ENCODE measurements at regions of chr14 and their contacts with region 1.

Region 1: GRCh38 chr14:79825046-79825521 is 386.2 kb downstream of the DIO2 start:
- DNase-seq: peak in 2 of 10 donors; percentile 27 to 58
- H3K4me3 ChIP-seq: peak overlapping the region in 21 of 59 donors; percentile 0 to 38 (median 17)
- H3K27ac ChIP-seq: peak overlapping the region; percentile 76 to 100 (median 94)
- H3K27me3 ChIP-seq: no peaks in the 10 kb centered on the region
- CTCF ChIP-seq: peak in 3 of 56 donors; percentile 10 to 18 (median 14)

Region 2: DNA sequence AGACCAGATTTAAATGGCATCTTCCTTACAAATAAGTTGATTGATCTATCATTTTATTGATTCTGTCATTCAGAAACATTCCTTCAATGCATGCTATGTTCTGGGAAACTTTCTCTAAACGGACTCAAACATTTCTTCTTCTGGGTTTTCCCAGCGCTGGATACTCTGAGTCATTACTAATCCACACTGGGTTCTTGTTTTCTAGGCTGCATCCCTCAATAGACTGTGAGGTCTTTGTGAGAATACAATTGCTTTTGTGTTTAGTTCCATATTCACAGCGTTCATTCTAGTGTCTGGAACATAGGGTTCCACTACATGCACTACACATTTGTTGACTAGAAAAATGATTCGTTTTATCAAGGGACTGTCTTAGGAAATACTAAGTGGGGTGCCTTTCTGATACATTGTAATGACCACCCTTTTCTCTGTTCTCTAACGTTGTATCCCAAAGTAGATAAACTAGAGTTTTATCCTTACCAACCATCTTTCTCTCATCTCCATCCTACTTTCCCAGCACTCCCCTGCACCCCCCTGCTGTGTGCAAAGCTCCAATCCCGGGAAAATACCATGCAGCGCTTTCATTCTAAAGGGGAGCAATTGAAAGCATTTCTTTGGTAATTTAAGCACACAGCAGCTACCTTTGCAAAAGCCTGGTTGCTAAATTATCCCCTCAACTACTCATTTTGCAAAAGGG is 492.4 kb before region 1 on chr14:
- intact Hi-C with region 1: loop called in 1 of 2 experiments (anchors 10 kb)
- DNase-seq: peak in 3 of 10 donors; percentile 13 to 44 (median 24)
- H3K4me3 ChIP-seq: peak overlapping the region in 50 of 59 donors; percentile 0 to 62 (median 34)
- H3K27ac ChIP-seq: peak overlapping the region in 50 of 59 donors; percentile 7 to 91 (median 72)
- H3K27me3 ChIP-seq: no peaks in the 10 kb centered on the region
- CTCF ChIP-seq: peak in 3 of 56 donors; percentile 6 to 31 (median 28)

Region 3: DNA sequence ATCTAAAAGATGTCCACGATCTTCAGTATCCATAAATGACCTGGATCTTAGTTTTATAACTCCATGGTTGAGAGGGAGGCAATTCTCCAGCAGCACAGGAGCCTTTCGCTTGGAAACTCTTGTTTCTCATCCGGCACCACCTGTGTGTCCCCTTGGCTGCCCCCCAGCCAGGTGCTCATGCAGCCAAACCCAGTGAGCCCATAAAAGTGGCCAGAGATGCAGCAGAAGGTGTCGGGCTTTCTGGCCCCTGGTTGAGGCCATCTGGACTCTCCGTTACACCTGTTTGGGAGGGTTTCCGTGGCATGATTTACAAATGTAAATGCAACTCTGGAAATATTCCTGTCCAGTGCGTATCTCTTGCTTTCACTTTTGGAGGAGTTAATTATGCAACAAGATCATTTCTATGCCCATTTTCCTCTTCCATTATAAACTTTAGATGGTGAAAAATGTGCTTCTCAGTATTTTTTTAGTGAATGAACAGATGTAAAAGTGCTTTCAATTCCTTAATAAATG is 95.2 kb after region 1 on chr14:
- intact Hi-C with region 1: no loop called
- DNase-seq: peak in 1 of 10 donors; percentile 93
- H3K4me3 ChIP-seq: no peak overlapping the region
- H3K27ac ChIP-seq: peak overlapping the region in 1 of 59 donors; percentile 83
- H3K27me3 ChIP-seq: no peaks in the 10 kb centered on the region
- CTCF ChIP-seq: no peak